Activated CD4-positive, alpha-beta T cell treated with anti-CD3 and anti-CD28 coated beads, Interleukin-2, amount 10 ng/mL, durations not matched to agents 24 days and 14 days (primary cell): ENCODE measurements at regions of chr22 and their contacts with region 1.

Region 1: DNA sequence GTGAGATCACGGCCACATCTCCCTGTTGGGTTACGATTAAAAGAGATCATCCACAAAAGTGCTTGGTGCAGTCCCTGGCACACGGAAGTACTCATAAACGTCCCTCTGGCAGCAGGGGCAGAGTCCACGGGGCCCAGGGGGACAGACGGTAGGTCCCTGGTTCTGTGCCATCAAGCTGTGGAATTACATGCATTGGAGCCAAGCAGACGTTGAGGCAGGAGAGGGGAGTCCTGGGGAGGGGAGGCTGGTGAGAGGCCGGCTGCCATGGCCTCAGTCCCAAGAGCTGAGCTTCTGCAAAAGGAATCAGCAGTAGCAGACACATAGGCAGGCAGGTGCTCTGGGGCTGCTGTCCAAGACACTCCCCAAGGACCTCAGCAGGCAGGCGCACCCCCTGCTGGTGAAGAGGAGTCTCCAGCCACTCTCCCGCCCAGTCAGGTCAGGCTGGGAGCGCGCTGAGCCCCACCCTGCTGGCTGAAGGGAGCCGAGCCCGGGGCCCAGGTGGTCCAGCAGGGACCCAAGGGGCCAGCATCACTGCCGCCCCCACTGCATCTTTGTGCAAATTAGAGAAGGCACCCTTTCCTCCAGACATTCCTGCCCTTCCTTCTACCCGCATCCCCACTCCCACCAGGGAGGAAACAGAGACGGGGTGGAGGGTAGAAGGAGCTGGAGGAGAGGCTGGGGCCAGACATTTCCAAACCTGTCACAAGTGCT is 7.6 kb upstream of the KCTD17 start:
- DNase-seq: peak; percentile 86
- H3K4me3 Mint-ChIP-seq: no peak overlapping the region
- H3K27ac Mint-ChIP-seq: no peak overlapping the region
- H3K4me1 Mint-ChIP-seq: peaks cover 25% of the 10 kb centered on the region
- H3K27me3 Mint-ChIP-seq: no peaks in the 10 kb centered on the region

Region 2: GRCh38 chr22:36781656-36782627 is 262.0 kb before region 1 on chr22:
- intact Hi-C with region 1: loop called (anchors 2 kb)
- DNase-seq: peak; percentile 97
- H3K4me3 Mint-ChIP-seq: peak overlapping the region; percentile 63
- H3K27ac Mint-ChIP-seq: peak overlapping the region; percentile 95
- H3K4me1 Mint-ChIP-seq: peaks cover 27% of the 10 kb centered on the region
- H3K27me3 Mint-ChIP-seq: peaks cover 1% of the 10 kb centered on the region

Region 3: DNA sequence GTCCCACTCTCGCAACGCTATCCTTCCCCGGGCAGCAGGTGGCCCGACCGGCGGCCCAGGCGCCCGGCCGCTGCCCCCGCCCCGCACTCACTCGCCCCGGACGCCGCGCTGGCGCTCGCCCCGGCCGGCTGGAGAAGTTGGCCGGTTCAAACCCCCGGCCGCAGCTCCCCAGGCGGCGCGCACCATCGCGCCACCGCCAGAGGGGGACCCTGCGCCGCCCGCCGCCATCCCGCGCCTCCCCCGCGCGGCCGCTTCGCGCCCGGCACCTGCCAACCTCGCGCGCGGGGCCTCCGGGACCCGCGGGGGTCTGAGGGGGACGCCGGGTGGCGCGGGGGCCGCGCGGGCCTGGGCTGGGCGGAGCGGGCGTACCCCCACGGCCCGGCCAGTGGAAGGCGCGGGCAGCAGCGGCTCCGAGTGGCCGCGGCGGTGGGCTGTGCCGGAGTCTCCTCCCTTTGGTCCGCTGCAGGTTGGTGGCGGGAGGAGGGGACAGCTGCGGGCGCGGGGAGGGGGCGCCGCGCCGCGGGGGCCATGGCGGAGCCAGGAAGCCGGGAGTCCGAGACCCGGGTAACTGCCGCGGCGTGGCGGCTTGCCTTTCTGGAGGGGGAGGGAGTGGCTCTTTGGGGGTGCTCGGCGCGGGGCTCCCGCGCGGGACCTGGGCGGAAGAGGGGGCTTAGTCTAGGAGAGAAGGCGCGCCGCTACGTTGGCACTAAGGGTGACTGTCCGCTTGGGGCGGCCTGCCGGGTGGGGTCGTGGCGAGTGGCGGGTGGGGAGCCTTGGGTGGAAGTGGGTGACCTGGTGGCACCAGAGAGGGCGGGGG is 24.5 kb before region 1 on chr22 and contains the starts of genes MPST and TST:
- intact Hi-C with region 1: no loop called
- DNase-seq: peak; percentile 87
- H3K4me3 Mint-ChIP-seq: peak within 1 kb of the TSS; percentile 93
- H3K27ac Mint-ChIP-seq: peak within 1 kb of the TSS; percentile 89
- H3K4me1 Mint-ChIP-seq: peaks cover 16% of the 10 kb centered on the region
- H3K27me3 Mint-ChIP-seq: peaks cover 2% of the 10 kb centered on the region
- total RNA-seq, gene MPST: 21.0 and 21.1 TPM in 2 replicates
- total RNA-seq, gene TST: 5.2 and 5.8 TPM in 2 replicates

Region 4: GRCh38 chr22:37060801-37061610 is 17.0 kb after region 1 on chr22:
- intact Hi-C with region 1: no loop called
- DNase-seq: peak; percentile 72
- H3K4me3 Mint-ChIP-seq: peak overlapping the region; percentile 62
- H3K27ac Mint-ChIP-seq: peak overlapping the region; percentile 79
- H3K4me1 Mint-ChIP-seq: peaks cover 21% of the 10 kb centered on the region
- H3K27me3 Mint-ChIP-seq: no peaks in the 10 kb centered on the region